Prostate gland (tissue), 2 donors: ENCODE measurements at regions of chr5 and their contacts with region 1.

Region 1: GRCh38 chr5:112146323-112147226 is 272.5 kb downstream of the EPB41L4A start:
- DNase-seq: peak; percentile 66
- H3K4me3 ChIP-seq: no peak overlapping the region
- H3K27ac ChIP-seq: no peak overlapping the region
- H3K4me1 ChIP-seq: no peaks in the 10 kb centered on the region
- H3K27me3 ChIP-seq: no peaks in the 10 kb centered on the region
- CTCF ChIP-seq: peak; percentile 69 to 90 (median 84)
- POLR2A ChIP-seq: no peak

Region 2: GRCh38 chr5:111530298-111530740 is 616.3 kb before region 1 on chr5:
- intact Hi-C with region 1: loop called (anchors 5 kb)
- DNase-seq: no peak
- H3K4me3 ChIP-seq: no peak overlapping the region
- H3K27ac ChIP-seq: no peak overlapping the region
- H3K4me1 ChIP-seq: no peaks in the 10 kb centered on the region
- H3K27me3 ChIP-seq: no peaks in the 10 kb centered on the region
- CTCF ChIP-seq: no peak
- POLR2A ChIP-seq: no peak

Region 3: DNA sequence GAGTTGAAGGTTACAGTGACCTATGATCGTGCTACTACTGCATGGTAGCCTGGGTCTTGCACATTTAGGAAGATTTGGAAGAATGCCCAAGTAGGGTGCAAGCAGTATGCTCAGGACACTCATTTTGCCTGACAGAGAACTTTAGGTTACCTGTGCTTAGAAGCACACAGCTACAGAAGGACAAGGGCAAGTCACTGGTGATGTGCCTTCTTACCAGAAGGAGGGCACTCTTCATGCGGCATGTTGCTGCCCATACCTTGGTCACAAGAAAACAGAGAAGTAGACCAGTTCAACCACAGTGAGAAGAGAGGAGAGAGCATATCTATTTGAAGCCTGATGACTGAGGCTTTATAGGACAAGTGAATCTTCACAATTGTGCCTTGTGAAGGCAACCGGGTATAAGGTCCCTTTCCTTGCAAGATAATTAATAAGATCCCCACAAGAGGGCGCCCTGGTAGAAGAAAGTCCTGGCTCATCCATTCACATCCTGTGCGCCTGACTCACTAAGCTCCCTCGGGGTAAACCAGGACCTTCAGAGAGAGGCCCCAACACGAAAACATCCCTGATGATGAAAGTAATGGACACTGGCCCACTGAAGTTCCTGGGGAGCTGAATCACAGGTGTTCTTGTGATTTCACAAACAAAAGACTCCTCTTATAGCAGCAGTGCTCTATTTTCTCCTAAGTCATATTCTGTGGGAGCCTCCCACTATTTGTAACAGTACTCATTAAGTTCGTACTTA is 596.1 kb before region 1 on chr5:
- intact Hi-C with region 1: loop called (anchors 2 kb)
- DNase-seq: peak; percentile 84
- H3K4me3 ChIP-seq: no peak overlapping the region
- H3K27ac ChIP-seq: no peak overlapping the region
- H3K4me1 ChIP-seq: no peaks in the 10 kb centered on the region
- H3K27me3 ChIP-seq: no peaks in the 10 kb centered on the region
- CTCF ChIP-seq: peak in 3 of 4 experiments; percentile 63 to 74 (median 70)
- POLR2A ChIP-seq: no peak

Region 4: DNA sequence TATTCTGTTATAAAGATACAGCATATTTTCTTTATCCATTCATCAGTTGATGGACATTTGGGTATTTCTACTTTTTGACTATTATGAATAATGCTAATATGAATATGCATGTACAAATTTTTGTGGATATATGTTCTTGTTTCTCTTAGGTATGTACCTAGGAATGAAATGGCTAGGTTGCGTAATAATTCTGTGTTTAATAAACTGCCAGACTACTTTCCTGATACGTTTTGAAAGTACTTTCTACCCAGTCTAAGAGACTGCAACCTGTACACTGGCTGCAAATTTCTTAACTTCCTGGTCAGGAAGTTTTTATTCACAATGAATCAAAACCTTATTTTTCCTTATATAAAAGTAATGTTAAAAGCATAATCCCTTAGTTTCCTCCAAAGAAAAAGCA is 540.4 kb before region 1 on chr5:
- intact Hi-C with region 1: no loop called
- DNase-seq: no peak
- H3K4me3 ChIP-seq: no peak overlapping the region
- H3K27ac ChIP-seq: no peak overlapping the region
- H3K4me1 ChIP-seq: no peaks in the 10 kb centered on the region
- H3K27me3 ChIP-seq: no peaks in the 10 kb centered on the region
- CTCF ChIP-seq: no peak
- POLR2A ChIP-seq: no peak